GM10248 (cell line): ENCODE measurements at regions of chr14 and their contacts with region 1.

Region 1: DNA sequence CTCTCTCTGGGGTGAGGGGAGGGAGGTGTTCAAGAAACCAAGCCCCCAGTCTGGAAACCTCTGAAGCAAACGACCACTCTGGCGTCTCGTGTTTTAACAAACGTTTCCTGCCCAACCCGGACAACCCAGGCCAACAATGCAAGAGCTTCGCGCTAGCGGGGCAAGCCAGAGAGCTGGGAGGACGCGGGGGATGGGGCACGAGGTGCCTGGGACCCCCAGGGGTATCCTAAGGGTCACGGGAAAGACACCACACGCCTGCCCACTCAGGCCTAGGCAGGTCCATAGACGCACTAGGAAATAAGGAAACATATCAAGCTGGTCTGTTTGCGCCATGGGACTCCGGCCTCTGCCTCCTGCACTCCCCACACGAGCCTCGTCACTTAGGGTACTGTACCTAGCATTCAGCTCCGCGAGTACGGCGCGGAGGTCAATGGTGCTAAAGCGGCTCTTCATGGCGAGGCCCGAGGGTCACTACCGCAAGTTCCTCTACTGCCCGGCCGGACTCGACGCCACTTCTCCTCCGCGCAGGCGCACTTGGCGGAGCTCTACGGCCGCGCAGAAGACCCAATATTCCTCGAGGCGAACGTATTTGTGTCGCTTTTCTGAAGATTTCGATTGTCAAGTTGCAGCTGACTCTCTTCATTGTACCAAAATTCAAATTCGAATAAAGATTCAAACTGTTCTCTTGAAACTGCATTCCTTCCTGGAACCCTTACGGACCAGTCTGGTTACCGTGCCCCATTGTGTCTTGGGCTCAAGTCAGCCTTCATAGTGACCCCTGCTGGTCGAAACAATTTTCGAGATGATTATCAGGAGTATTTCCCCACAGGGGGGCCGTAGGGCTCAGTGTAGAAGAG is at the start of gene NEMF:
- DNase-seq: peak; percentile 81
- CTCF ChIP-seq: peak; percentile 78

Region 2: DNA sequence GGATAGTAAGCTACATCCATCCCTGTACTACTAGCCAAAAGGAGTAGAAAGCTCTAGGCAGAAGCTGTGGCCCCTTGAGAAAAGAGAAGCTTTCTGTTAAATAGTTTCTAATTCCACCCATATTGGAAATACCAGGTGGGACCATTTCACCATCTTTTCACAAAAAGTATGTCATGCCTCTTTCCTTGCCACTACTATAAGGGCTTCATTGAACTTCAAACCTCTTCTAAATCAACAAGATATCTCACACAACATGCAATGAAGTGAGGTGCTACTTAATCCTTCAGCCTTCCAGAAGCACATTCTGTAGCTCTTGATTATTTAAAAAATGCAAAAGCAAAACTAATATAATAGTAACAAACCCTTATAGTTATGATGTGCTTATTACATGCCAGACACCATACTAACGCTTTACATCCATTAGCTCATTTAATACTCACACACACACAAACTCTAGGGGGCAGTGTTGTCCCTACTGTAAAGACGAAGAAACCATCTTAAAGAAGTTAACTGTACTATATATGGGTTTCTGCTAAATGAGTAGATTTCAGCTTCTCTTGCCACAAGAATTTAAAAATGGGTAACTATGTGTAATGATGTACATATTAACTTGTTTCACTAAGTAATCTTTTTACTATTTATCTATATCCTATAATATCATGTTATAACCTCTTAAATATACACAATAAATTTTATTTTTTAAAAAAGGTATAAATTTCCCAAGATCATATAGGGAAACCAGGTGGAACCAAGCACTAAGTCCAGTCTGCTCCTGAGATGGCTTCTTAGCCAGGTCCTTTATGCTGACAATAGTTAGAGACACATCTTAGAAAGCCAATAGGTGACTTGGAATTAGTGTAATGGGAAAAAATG is 390.8 kb before region 1 on chr14:
- CTCF ChIA-PET with region 1: interaction called, 15 read pairs
- POLR2A ChIA-PET with region 1: no interaction called
- DNase-seq: peak; percentile 33
- CTCF ChIP-seq: peak; percentile 55

Region 3: DNA sequence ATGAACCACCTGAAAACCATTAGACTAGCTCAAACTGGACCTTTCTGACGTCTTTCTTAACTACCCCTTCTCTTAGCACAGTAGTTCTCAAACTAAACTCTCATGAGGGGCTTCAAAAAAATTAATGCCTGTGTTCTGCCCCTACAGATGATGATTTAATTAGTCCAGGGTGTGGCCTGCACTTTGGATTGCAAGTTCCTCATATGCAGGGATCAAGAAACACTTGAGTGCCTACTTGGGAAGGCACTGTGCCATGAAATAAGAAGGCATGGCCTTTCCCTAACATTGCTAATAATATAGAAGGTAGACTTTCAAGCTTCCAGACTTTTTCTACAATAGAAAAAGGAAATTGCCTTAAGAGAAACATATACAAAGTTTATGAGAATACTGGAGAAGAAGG is 107.3 kb before region 1 on chr14:
- CTCF ChIA-PET with region 1: no interaction called
- POLR2A ChIA-PET with region 1: no interaction called
- DNase-seq: no peak
- CTCF ChIP-seq: no peak

Region 4: GRCh38 chr14:49755378-49755777 is 97.2 kb before region 1 on chr14:
- CTCF ChIA-PET with region 1: no interaction called
- POLR2A ChIA-PET with region 1: no interaction called
- DNase-seq: no peak
- CTCF ChIP-seq: no peak

Region 5: GRCh38 chr14:49767562-49768300 is 84.8 kb before region 1 on chr14 and contains the start of gene KLHDC2:
- CTCF ChIA-PET with region 1: interaction called, 12 read pairs
- POLR2A ChIA-PET with region 1: no interaction called
- DNase-seq: peak; percentile 90
- CTCF ChIP-seq: peak; percentile 75

Region 6: DNA sequence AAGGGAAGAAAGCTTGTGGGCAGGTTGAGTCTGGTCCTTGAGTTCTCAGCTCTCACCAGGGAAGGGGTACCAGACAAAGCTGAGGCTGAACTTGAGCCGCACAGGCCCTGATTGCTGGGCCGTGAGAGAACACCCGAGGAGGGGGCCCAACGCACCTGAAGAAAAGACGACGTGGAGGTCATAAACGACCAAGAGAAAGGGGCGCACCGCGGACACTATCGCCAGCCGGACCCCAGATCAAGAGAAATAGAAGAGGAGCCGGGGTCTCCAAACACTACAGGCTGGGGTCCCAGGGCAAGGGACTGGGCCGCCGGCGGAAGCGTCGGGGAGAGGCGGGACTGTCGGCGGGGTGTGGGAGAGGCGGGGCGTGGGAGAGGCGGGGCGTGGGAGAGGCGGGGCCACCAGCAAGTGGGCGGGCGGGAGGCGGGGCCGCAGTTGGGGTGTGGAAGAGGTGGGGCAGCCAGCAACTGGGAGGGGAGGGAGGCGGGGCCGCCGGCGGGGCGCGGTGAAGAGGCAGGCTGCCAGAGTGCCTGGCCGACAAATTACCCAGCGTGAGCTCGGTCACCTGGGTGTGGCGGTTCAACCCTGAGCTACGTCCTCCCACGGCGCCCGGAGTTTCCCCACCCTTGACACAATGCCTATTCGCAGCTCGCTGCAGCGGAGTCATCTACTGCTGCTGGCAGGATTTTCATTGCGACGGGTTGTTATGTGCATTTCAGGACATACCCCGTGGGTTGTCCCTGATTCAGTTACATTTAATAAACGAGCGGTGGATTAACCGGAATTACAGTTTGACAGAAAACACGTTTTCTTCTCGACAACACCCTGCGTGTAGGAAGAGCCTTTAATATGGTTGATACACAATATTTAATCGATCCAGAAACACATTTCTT is 15.5 kb after region 1 on chr14:
- CTCF ChIA-PET with region 1: interaction called, 226 read pairs
- POLR2A ChIA-PET with region 1: interaction called, 13 read pairs
- DNase-seq: peak; percentile 95
- CTCF ChIP-seq: no peak

Region 7: DNA sequence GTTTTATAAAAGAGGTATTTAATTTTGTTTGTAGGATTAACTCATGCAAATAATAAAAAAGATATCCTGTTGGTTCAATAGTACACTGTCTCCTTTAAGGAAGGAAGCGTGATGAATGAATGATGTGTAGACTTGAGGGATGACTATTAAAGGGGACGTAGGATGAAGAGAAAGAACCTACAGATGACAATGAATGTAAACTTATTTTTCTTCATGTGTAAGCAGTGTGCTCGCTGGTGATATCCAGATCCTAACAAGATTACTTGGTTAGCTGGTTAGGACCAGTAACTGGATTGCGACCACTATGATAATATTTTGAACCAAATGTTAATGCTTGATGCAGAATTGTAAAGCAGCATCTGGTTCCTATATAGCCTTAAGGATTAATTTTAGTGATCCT is 43.0 kb after region 1 on chr14:
- CTCF ChIA-PET with region 1: no interaction called
- POLR2A ChIA-PET with region 1: no interaction called
- DNase-seq: no peak
- CTCF ChIP-seq: no peak

Region 8: DNA sequence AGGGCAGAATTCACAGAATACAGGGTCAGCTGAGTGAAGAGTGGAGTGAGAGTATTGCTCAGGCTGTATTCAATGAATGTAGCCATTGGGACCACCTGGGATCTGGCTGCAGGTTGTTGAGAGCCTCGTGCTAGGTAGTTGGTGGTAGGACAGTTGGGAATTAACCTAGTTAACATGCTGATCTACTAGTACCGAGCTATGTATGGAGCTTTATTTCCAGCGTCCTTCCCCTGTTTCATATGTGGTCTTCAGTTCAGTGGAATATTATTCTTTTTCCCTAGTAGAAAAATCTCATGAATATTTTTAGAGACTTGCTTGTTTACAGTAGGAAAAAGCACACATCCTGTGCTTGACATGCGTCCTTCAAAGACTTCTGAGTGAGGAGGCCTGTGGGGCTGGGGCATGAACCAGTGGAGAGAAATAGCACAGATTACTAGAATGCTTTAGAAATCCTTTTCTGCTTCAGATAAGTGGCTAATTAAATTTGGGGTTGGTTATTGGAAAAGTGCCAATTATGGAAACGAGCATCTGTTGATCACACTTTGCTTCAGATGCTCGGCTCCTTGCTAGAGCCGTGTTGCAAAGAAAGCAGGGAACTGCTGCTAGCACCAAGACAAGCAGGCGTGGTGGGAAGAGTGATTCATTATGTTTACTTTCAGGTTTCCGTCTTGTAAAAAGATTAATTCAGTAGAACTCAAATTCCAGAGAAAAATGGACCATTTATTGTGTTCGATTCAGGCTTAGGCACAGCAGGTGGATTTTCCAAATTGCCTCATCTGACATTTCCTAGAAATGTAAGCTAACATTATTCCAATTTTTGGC is 94.0 kb after region 1 on chr14:
- CTCF ChIA-PET with region 1: no interaction called
- POLR2A ChIA-PET with region 1: no interaction called
- DNase-seq: no peak
- CTCF ChIP-seq: no peak

Region 9: GRCh38 chr14:50103558-50103957 is 251.0 kb after region 1 on chr14:
- CTCF ChIA-PET with region 1: interaction called, 29 read pairs
- POLR2A ChIA-PET with region 1: no interaction called
- DNase-seq: no peak
- CTCF ChIP-seq: no peak

Region 10: DNA sequence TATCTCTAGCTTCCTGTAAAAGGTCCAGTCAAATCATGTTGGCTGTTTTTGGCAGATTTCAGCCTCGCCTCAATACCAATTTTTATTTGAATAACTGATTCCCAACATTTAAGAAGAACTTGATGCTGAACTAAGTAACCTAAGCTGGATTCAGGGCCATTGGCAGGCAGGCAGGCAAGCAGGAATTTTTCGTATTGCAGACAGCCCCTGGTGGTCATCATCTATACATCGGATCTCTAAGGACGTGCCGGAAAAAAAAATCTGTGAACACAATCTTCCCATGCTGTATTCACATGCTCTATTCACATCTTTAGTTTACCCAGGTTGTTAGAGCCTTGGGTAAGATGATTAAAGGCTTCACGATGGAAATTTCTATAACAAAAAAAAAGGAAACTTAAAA is 256.8 kb after region 1 on chr14:
- CTCF ChIA-PET with region 1: interaction called, 29 read pairs
- POLR2A ChIA-PET with region 1: no interaction called
- DNase-seq: no peak
- CTCF ChIP-seq: no peak